CD4-positive, alpha-beta T cell (primary cell): ENCODE measurements at regions of chr12 and their contacts with region 1.

Region 1: GRCh38 chr12:7933255-7933729 is 2.7 kb downstream of the SLC2A3 start:
- DNase-seq: peak; percentile 53 to 94 (median 67)
- ATAC-seq: peak; percentile 70
- H3K4me3 ChIP-seq: peak overlapping the region; percentile 93
- H3K4me3 Mint-ChIP-seq: no peak overlapping the region
- H3K27ac ChIP-seq: peak overlapping the region; percentile 19 to 71
- H3K27ac Mint-ChIP-seq: no peak overlapping the region
- H3K4me1 ChIP-seq: peaks cover 47% of the 10 kb centered on the region
- H3K4me1 Mint-ChIP-seq: peaks cover 35% of the 10 kb centered on the region
- H3K27me3 ChIP-seq: no peaks in the 10 kb centered on the region
- H3K27me3 Mint-ChIP-seq: no peaks in the 10 kb centered on the region
- CTCF ChIP-seq: peak; percentile 87

Region 2: DNA sequence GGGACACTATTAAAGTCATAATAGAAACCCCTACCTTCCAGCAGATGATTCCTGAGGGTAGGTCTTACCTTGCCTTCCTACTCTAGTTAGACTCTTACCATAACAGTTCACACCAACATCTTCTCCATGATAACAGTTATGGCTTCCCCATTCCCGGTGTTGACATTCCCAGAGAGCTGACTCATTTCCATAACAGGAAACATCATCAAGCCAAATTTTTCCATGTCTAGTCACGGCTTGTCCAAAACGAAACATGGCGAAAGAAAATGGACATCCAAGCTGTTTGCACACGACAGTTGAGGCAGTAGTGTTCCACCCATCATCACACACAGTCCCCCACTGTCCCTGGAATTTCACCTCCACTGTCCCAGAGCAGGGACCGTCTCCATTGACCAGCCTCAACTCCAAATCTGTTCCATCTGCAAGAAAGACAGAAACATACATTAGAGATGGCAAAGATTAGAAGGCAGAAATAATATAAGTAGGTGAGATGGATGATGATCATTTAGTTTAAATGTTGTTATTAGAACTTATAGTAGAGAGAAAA is 499.9 kb before region 1 on chr12:
- CTCF ChIA-PET with region 1: no interaction called
- POLR2A ChIA-PET with region 1: no interaction called
- intact Hi-C with region 1: no loop called
- DNase-seq: no peak
- ATAC-seq: no peak
- H3K4me3 ChIP-seq: no peak overlapping the region
- H3K4me3 Mint-ChIP-seq: no peak overlapping the region
- H3K27ac ChIP-seq: no peak overlapping the region
- H3K27ac Mint-ChIP-seq: no peak overlapping the region
- H3K4me1 ChIP-seq: no peaks in the 10 kb centered on the region
- H3K4me1 Mint-ChIP-seq: no peaks in the 10 kb centered on the region
- H3K27me3 ChIP-seq: no peaks in the 10 kb centered on the region
- H3K27me3 Mint-ChIP-seq: peaks cover 8% of the 10 kb centered on the region
- CTCF ChIP-seq: no peak

Region 3: DNA sequence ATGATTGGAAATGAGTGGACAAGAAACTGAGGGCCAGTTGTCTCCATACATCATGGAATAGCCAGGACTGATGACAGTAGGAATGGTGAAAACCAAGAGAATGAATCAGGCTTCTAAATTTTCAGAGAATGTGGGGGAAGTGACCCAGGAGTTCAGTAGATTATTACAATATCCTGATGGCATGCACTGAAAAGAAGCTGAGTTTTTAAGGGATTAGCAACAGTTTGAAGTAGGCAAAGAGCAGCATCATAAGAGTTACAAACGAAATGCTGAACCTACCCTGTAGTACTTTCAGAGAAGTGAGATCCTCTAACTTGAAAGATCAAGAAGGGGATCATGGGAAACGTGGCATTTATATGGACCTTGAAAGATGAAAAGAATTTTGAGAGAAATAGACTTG is 73.7 kb before region 1 on chr12:
- CTCF ChIA-PET with region 1: interaction called, 7 read pairs
- POLR2A ChIA-PET with region 1: interaction called, 10 read pairs
- intact Hi-C with region 1: loop called (anchors 2 to 5 kb)
- DNase-seq: no peak
- ATAC-seq: no peak
- H3K4me3 ChIP-seq: no peak overlapping the region
- H3K4me3 Mint-ChIP-seq: no peak overlapping the region
- H3K27ac ChIP-seq: no peak overlapping the region
- H3K27ac Mint-ChIP-seq: no peak overlapping the region
- H3K4me1 ChIP-seq: peaks cover 4% of the 10 kb centered on the region
- H3K4me1 Mint-ChIP-seq: peaks cover 6% of the 10 kb centered on the region
- H3K27me3 ChIP-seq: peaks cover 0 to 3% of the 10 kb centered on the region in 2 experiments
- H3K27me3 Mint-ChIP-seq: no peaks in the 10 kb centered on the region
- CTCF ChIP-seq: no peak

Region 4: DNA sequence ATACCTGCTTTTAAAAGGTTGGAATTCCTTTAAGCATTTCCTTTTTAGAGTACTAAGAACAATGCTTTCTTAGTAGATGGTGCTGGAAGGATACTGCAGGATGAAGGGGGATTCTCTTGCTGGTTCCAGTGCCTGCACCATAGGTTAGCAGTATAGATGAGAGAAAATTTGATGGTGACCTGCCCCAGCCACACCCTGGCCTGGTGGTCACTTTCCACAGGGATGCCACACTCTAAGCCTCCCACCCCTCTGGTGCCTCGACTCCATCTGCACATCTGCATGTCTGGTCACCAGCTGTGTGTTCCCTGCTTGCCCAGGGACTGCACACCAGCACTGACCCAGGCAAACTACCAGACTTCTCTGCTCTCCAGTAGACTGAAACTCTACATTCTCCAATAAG is 16.4 kb before region 1 on chr12:
- CTCF ChIA-PET with region 1: interaction called, 12 read pairs
- POLR2A ChIA-PET with region 1: interaction called, 6 read pairs
- intact Hi-C with region 1: no loop called
- DNase-seq: no peak
- ATAC-seq: no peak
- H3K4me3 ChIP-seq: no peak overlapping the region
- H3K4me3 Mint-ChIP-seq: no peak overlapping the region
- H3K27ac ChIP-seq: no peak overlapping the region
- H3K27ac Mint-ChIP-seq: peak overlapping the region; percentile 44
- H3K4me1 ChIP-seq: peaks cover 11% of the 10 kb centered on the region
- H3K4me1 Mint-ChIP-seq: peaks cover 48% of the 10 kb centered on the region
- H3K27me3 ChIP-seq: no peaks in the 10 kb centered on the region
- H3K27me3 Mint-ChIP-seq: no peaks in the 10 kb centered on the region
- CTCF ChIP-seq: no peak

Region 5: GRCh38 chr12:7970475-7971252 is 37.4 kb after region 1 on chr12:
- CTCF ChIA-PET with region 1: interaction called, 175 read pairs
- POLR2A ChIA-PET with region 1: interaction called, 125 read pairs
- intact Hi-C with region 1: loop called (anchors 1 kb)
- DNase-seq: peak; percentile 69 to 95 (median 80)
- ATAC-seq: peak; percentile 83
- H3K4me3 ChIP-seq: peak overlapping the region; percentile 68
- H3K4me3 Mint-ChIP-seq: peak overlapping the region; percentile 88
- H3K27ac ChIP-seq: peak overlapping the region; percentile 76 to 87
- H3K27ac Mint-ChIP-seq: peak overlapping the region; percentile 94
- H3K4me1 ChIP-seq: peaks cover 25% of the 10 kb centered on the region
- H3K4me1 Mint-ChIP-seq: peaks cover 30% of the 10 kb centered on the region
- H3K27me3 ChIP-seq: no peaks in the 10 kb centered on the region
- H3K27me3 Mint-ChIP-seq: no peaks in the 10 kb centered on the region
- CTCF ChIP-seq: no peak

Region 6: DNA sequence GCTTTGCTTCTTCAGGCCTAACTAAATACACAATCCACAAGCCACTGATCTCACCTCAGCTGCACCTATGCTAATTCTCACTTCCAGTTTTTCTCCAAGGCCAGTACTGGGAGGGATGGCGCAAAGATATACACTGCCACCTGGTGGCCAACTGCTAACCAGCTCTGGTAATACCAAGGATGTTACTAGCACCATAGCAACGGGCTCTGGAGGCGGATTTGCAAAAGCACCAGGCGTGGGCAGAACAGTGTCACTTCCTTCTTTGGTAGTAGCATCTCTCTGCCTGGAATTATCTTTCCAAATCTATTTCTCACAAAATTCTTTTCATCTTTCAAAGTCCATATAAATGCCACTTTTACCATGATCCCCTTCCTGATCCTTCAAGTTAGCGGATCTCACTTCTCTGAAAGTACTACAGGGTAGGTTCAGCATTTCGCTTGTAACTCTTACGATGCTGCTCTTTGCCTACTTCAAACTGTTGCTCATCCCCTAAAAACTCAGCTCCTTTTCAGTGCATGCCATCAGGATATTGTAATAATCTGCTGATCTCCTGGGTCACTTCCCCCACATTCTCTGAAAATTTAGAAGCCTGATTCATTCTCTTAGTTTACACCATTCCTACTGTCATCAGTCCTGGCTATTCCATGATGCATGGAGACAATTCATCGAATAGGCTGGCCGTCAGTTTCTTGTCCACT is 62.1 kb after region 1 on chr12:
- CTCF ChIA-PET with region 1: interaction called, 81 read pairs
- POLR2A ChIA-PET with region 1: interaction called, 57 read pairs
- intact Hi-C with region 1: loop called (anchors 1 kb)
- DNase-seq: peak; percentile 64 to 93 (median 76)
- ATAC-seq: peak; percentile 98
- H3K4me3 ChIP-seq: no peak overlapping the region
- H3K4me3 Mint-ChIP-seq: no peak overlapping the region
- H3K27ac ChIP-seq: no peak overlapping the region
- H3K27ac Mint-ChIP-seq: no peak overlapping the region
- H3K4me1 ChIP-seq: peaks cover 23% of the 10 kb centered on the region
- H3K4me1 Mint-ChIP-seq: peaks cover 12% of the 10 kb centered on the region
- H3K27me3 ChIP-seq: no peaks in the 10 kb centered on the region
- H3K27me3 Mint-ChIP-seq: no peaks in the 10 kb centered on the region
- CTCF ChIP-seq: peak; percentile 77

Region 7: GRCh38 chr12:8032242-8033152 is 99.2 kb after region 1 on chr12 and contains the start of gene FOXJ2:
- CTCF ChIA-PET with region 1: interaction called, 13 read pairs
- POLR2A ChIA-PET with region 1: interaction called, 51 read pairs
- intact Hi-C with region 1: no loop called
- DNase-seq: peak; percentile 68 to 91 (median 82)
- ATAC-seq: peak; percentile 83
- H3K4me3 ChIP-seq: peak within 1 kb of the TSS; percentile 99
- H3K4me3 Mint-ChIP-seq: peak within 1 kb of the TSS; percentile 94
- H3K27ac ChIP-seq: peak within 1 kb of the TSS; percentile 79 to 92
- H3K27ac Mint-ChIP-seq: peak within 1 kb of the TSS; percentile 96
- H3K4me1 ChIP-seq: peaks cover 62% of the 10 kb centered on the region
- H3K4me1 Mint-ChIP-seq: peaks cover 51% of the 10 kb centered on the region
- H3K27me3 ChIP-seq: no peaks in the 10 kb centered on the region
- H3K27me3 Mint-ChIP-seq: no peaks in the 10 kb centered on the region
- CTCF ChIP-seq: no peak
- total RNA-seq, gene FOXJ2: 36.3 to 38.5 TPM

Region 8: GRCh38 chr12:8088574-8088973 is 155.3 kb after region 1 on chr12:
- CTCF ChIA-PET with region 1: interaction called, 3 read pairs
- POLR2A ChIA-PET with region 1: interaction called, 4 read pairs
- intact Hi-C with region 1: loop called in 1 of 2 experiments (anchors 5 kb)
- DNase-seq: peak in 13 of 14 experiments; percentile 10 to 86 (median 39)
- ATAC-seq: peak; percentile 95
- H3K4me3 ChIP-seq: peak overlapping the region; percentile 3
- H3K4me3 Mint-ChIP-seq: peak overlapping the region; percentile 61
- H3K27ac ChIP-seq: peak overlapping the region; percentile 66 to 78
- H3K27ac Mint-ChIP-seq: peak overlapping the region; percentile 79
- H3K4me1 ChIP-seq: peaks cover 44% of the 10 kb centered on the region
- H3K4me1 Mint-ChIP-seq: peaks cover 39% of the 10 kb centered on the region
- H3K27me3 ChIP-seq: no peaks in the 10 kb centered on the region
- H3K27me3 Mint-ChIP-seq: no peaks in the 10 kb centered on the region
- CTCF ChIP-seq: no peak

Region 9: DNA sequence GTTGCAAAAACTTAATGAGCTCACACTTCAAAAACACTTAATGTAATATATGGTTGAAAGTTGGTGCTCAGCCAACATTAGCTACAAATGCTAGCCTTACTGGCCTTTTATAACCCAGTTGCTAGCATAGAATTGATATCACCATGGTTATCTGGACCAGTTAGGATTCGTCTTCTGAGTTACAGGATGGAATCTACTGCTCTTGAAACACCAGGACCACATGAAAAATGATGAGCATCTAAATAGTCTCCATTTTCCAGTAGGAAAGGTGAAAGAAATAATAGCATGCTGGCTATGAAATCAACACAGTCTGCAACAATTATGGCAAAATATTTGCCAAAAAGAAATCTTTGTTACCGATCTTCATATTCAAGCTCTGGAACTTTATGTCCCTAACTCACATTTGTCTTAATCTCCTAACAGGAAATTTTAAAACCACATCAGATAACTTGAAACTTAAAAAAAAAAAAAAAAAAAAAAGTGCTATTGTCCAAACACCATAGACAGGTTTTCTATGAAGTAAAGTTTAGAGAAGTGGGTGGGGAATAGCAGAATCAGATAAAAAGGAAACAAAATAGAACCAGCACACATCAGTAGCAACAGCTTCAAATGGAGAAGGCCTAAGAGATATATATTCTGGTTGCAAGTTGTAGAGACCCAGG is 1840.1 kb after region 1 on chr12:
- CTCF ChIA-PET with region 1: no interaction called
- POLR2A ChIA-PET with region 1: no interaction called
- intact Hi-C with region 1: no loop called
- DNase-seq: peak in 3 of 14 experiments; percentile 49 to 68 (median 53)
- ATAC-seq: peak; percentile 65
- H3K4me3 ChIP-seq: peak overlapping the region; percentile 2
- H3K4me3 Mint-ChIP-seq: peak overlapping the region; percentile 67
- H3K27ac ChIP-seq: peak overlapping the region in 1 of 2 donors; percentile 46
- H3K27ac Mint-ChIP-seq: peak overlapping the region; percentile 54
- H3K4me1 ChIP-seq: peaks cover 23% of the 10 kb centered on the region
- H3K4me1 Mint-ChIP-seq: peaks cover 89% of the 10 kb centered on the region
- H3K27me3 ChIP-seq: no peaks in the 10 kb centered on the region
- H3K27me3 Mint-ChIP-seq: no peaks in the 10 kb centered on the region
- CTCF ChIP-seq: no peak